ENCODE measurements at regions of chr2 and their contacts with region 1.

Region 1: GRCh38 chr2:218898109-218898878 is 17.6 kb downstream of the WNT10A start:
- DNase-seq: peak; percentile 77 to 90
- H3K4me3 ChIP-seq: peak overlapping the region; percentile 35
- H3K4me3 Mint-ChIP-seq: peak overlapping the region; percentile 66
- H3K27ac Mint-ChIP-seq: no peak overlapping the region
- H3K4me1 ChIP-seq: peaks cover 45% of the 10 kb centered on the region
- H3K4me1 Mint-ChIP-seq: peaks cover 48% of the 10 kb centered on the region
- H3K27me3 ChIP-seq: no peaks in the 10 kb centered on the region
- H3K27me3 Mint-ChIP-seq: peaks cover 8% of the 10 kb centered on the region
- CTCF ChIP-seq: peak; percentile 98

Region 2: GRCh38 chr2:218607436-218608115 is 290.7 kb before region 1 on chr2 and contains the start of gene PLCD4:
- CTCF ChIA-PET with region 1: no interaction called
- POLR2A ChIA-PET with region 1: no interaction called
- intact Hi-C with region 1: no loop called
- DNase-seq: no peak
- H3K4me3 ChIP-seq: no peak within 1 kb of the TSS
- H3K4me3 Mint-ChIP-seq: no peak within 1 kb of the TSS
- H3K27ac Mint-ChIP-seq: no peak within 1 kb of the TSS
- H3K4me1 ChIP-seq: no peaks in the 10 kb centered on the region
- H3K4me1 Mint-ChIP-seq: no peaks in the 10 kb centered on the region
- H3K27me3 ChIP-seq: no peaks in the 10 kb centered on the region
- H3K27me3 Mint-ChIP-seq: peaks cover 14% of the 10 kb centered on the region
- CTCF ChIP-seq: no peak
- total RNA-seq, gene PLCD4: 0.26 and 0.48 TPM in 2 replicates

Region 3: GRCh38 chr2:218659258-218659987 is 238.9 kb before region 1 on chr2 and contains the starts of genes BCS1L and ZNF142:
- CTCF ChIA-PET with region 1: interaction called, 11 read pairs
- POLR2A ChIA-PET with region 1: no interaction called
- intact Hi-C with region 1: no loop called
- DNase-seq: peak; percentile 94
- H3K4me3 ChIP-seq: peak within 1 kb of the TSS; percentile 80
- H3K4me3 Mint-ChIP-seq: peak within 1 kb of the TSS; percentile 95
- H3K27ac Mint-ChIP-seq: peak within 1 kb of the TSS; percentile 85
- H3K4me1 ChIP-seq: peaks cover 6% of the 10 kb centered on the region; the same call in 1 of the 2 replicates
- H3K4me1 Mint-ChIP-seq: peaks cover 9% of the 10 kb centered on the region
- H3K27me3 ChIP-seq: no peaks in the 10 kb centered on the region
- H3K27me3 Mint-ChIP-seq: no peaks in the 10 kb centered on the region
- CTCF ChIP-seq: no peak
- total RNA-seq, gene BCS1L: 68.3 and 74.6 TPM in 2 replicates
- total RNA-seq, gene ZNF142: 37.0 and 38.5 TPM in 2 replicates

Region 4: DNA sequence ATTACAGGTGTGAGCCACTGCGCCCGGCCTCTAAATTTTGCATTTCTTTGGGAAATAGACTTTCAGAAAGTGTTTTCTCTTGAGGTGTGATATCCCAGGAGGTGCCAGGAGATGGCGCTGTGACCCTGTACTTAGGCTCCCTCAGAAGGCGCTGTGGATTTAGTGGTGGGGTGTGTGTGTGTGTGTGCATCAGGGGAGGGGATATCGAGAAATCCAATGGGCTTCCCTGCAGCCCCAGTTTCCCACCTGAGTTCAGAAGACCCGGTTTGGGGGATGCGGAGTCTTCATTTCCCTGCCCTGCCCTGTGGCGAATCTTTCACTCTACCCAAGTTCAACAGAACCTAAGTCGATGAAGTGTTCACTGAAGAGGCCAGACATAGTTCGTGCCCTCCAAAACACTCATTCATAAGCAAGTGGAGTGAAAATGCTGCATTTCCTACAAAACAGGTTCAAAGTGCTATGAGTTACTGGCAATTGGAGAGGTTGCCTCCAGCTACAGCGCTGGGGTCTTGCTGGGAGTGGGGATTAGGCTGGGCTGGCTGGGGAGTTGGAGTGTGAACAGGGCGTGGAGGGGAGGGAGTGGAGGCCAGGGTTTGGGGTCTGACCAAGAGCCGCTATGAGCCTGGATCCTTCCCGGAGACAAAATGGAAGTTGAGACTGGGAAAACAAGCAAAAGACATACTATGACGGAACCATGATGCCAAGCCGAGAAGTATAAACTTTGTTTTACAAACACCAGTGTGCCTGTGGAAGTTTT is 45.2 kb before region 1 on chr2:
- CTCF ChIA-PET with region 1: interaction called, 18 read pairs
- POLR2A ChIA-PET with region 1: no interaction called
- intact Hi-C with region 1: loop called (anchors 1 kb)
- DNase-seq: peak; percentile 64 to 75
- H3K4me3 ChIP-seq: no peak overlapping the region
- H3K4me3 Mint-ChIP-seq: no peak overlapping the region
- H3K27ac Mint-ChIP-seq: no peak overlapping the region
- H3K4me1 ChIP-seq: peaks cover 26% of the 10 kb centered on the region
- H3K4me1 Mint-ChIP-seq: peaks cover 37% of the 10 kb centered on the region
- H3K27me3 ChIP-seq: no peaks in the 10 kb centered on the region
- H3K27me3 Mint-ChIP-seq: peaks cover 3% of the 10 kb centered on the region
- CTCF ChIP-seq: peak; percentile 87 to 91

Region 5: GRCh38 chr2:218876562-218877219 is 21.6 kb before region 1 on chr2:
- CTCF ChIA-PET with region 1: interaction called, 152 read pairs
- POLR2A ChIA-PET with region 1: interaction called, 8 read pairs
- intact Hi-C with region 1: loop called (anchors 1 kb)
- DNase-seq: peak; percentile 83 to 87
- H3K4me3 ChIP-seq: no peak overlapping the region
- H3K4me3 Mint-ChIP-seq: no peak overlapping the region
- H3K27ac Mint-ChIP-seq: no peak overlapping the region
- H3K4me1 ChIP-seq: peaks cover 17% of the 10 kb centered on the region
- H3K4me1 Mint-ChIP-seq: no peaks in the 10 kb centered on the region
- H3K27me3 ChIP-seq: no peaks in the 10 kb centered on the region
- H3K27me3 Mint-ChIP-seq: no peaks in the 10 kb centered on the region
- CTCF ChIP-seq: peak; percentile 94 to 97

Region 6: GRCh38 chr2:218908721-218909619 is 10.7 kb after region 1 on chr2:
- CTCF ChIA-PET with region 1: interaction called, 45 read pairs
- POLR2A ChIA-PET with region 1: interaction called, 13 read pairs
- intact Hi-C with region 1: no loop called
- DNase-seq: peak; percentile 96 to 97
- H3K4me3 ChIP-seq: peak overlapping the region; percentile 74
- H3K4me3 Mint-ChIP-seq: peak overlapping the region; percentile 85
- H3K27ac Mint-ChIP-seq: peak overlapping the region; percentile 84
- H3K4me1 ChIP-seq: peaks cover 9% of the 10 kb centered on the region; the same call in 1 of the 2 replicates
- H3K4me1 Mint-ChIP-seq: peaks cover 8% of the 10 kb centered on the region
- H3K27me3 ChIP-seq: no peaks in the 10 kb centered on the region
- H3K27me3 Mint-ChIP-seq: peaks cover 3% of the 10 kb centered on the region
- CTCF ChIP-seq: no peak

Region 7: GRCh38 chr2:218979846-218980734 is 81.8 kb after region 1 on chr2:
- CTCF ChIA-PET with region 1: interaction called, 20 read pairs
- POLR2A ChIA-PET with region 1: no interaction called
- intact Hi-C with region 1: no loop called
- DNase-seq: peak; percentile 87 to 90
- H3K4me3 ChIP-seq: peak overlapping the region; percentile 28
- H3K4me3 Mint-ChIP-seq: peak overlapping the region; percentile 31
- H3K27ac Mint-ChIP-seq: no peak overlapping the region
- H3K4me1 ChIP-seq: peaks cover 14% of the 10 kb centered on the region
- H3K4me1 Mint-ChIP-seq: peaks cover 6% of the 10 kb centered on the region
- H3K27me3 ChIP-seq: peaks cover 9% of the 10 kb centered on the region
- H3K27me3 Mint-ChIP-seq: peaks cover 23% of the 10 kb centered on the region
- CTCF ChIP-seq: peak; percentile 92 to 97

Measured in Caco-2 (cell line).